Activated CD8-positive, alpha-beta T cell treated with anti-CD3 and anti-CD28 coated beads, Interleukin-2, amount 10 ng/mL, durations not matched to agents 7 days and 5 days (primary cell): ENCODE measurements at regions of chr7 and their contacts with region 1.

Region 1: GRCh38 chr7:5677538-5678294 is 103.7 kb downstream of the RNF216 start:
- DNase-seq: peak; percentile 64
- ATAC-seq: peak; percentile 48
- H3K4me3 Mint-ChIP-seq: no peak overlapping the region
- H3K27ac Mint-ChIP-seq: no peak overlapping the region
- H3K4me1 Mint-ChIP-seq: peaks cover 51% of the 10 kb centered on the region
- H3K27me3 Mint-ChIP-seq: no peaks in the 10 kb centered on the region

Region 2: GRCh38 chr7:5494683-5495561 is 182.8 kb before region 1 on chr7:
- CTCF ChIA-PET with region 1: interaction called, 20 read pairs
- POLR2A ChIA-PET with region 1: no interaction called
- DNase-seq: peak; percentile 85
- ATAC-seq: peak; percentile 91
- H3K4me3 Mint-ChIP-seq: no peak overlapping the region
- H3K27ac Mint-ChIP-seq: peak overlapping the region; percentile 46
- H3K4me1 Mint-ChIP-seq: peaks cover 44% of the 10 kb centered on the region
- H3K27me3 Mint-ChIP-seq: no peaks in the 10 kb centered on the region

Region 3: GRCh38 chr7:5557920-5558401 is 119.8 kb before region 1 on chr7:
- CTCF ChIA-PET with region 1: interaction called, 20 read pairs
- POLR2A ChIA-PET with region 1: no interaction called
- DNase-seq: peak; percentile 39
- ATAC-seq: peak; percentile 21
- H3K4me3 Mint-ChIP-seq: peak overlapping the region; percentile 81
- H3K27ac Mint-ChIP-seq: peak overlapping the region; percentile 90
- H3K4me1 Mint-ChIP-seq: peaks cover 55% of the 10 kb centered on the region
- H3K27me3 Mint-ChIP-seq: peaks cover 7% of the 10 kb centered on the region

Region 4: GRCh38 chr7:5646852-5647251 is 30.9 kb before region 1 on chr7:
- CTCF ChIA-PET with region 1: no interaction called
- POLR2A ChIA-PET with region 1: no interaction called
- DNase-seq: no peak
- ATAC-seq: no peak
- H3K4me3 Mint-ChIP-seq: no peak overlapping the region
- H3K27ac Mint-ChIP-seq: no peak overlapping the region
- H3K4me1 Mint-ChIP-seq: peaks cover 30% of the 10 kb centered on the region
- H3K27me3 Mint-ChIP-seq: no peaks in the 10 kb centered on the region

Region 5: GRCh38 chr7:5689118-5689517 is 11.4 kb after region 1 on chr7:
- CTCF ChIA-PET with region 1: interaction called, 28 read pairs
- POLR2A ChIA-PET with region 1: interaction called, 6 read pairs
- DNase-seq: peak; percentile 71
- ATAC-seq: peak; percentile 58
- H3K4me3 Mint-ChIP-seq: peak overlapping the region; percentile 51
- H3K27ac Mint-ChIP-seq: peak overlapping the region; percentile 90
- H3K4me1 Mint-ChIP-seq: peaks cover 94% of the 10 kb centered on the region
- H3K27me3 Mint-ChIP-seq: no peaks in the 10 kb centered on the region

Region 6: GRCh38 chr7:5694912-5695726 is 17.4 kb after region 1 on chr7:
- CTCF ChIA-PET with region 1: interaction called, 28 read pairs
- POLR2A ChIA-PET with region 1: interaction called, 6 read pairs
- DNase-seq: peak; percentile 89
- ATAC-seq: peak; percentile 81
- H3K4me3 Mint-ChIP-seq: peak overlapping the region; percentile 73
- H3K27ac Mint-ChIP-seq: peak overlapping the region; percentile 89
- H3K4me1 Mint-ChIP-seq: peaks cover 94% of the 10 kb centered on the region
- H3K27me3 Mint-ChIP-seq: no peaks in the 10 kb centered on the region

Region 7: DNA sequence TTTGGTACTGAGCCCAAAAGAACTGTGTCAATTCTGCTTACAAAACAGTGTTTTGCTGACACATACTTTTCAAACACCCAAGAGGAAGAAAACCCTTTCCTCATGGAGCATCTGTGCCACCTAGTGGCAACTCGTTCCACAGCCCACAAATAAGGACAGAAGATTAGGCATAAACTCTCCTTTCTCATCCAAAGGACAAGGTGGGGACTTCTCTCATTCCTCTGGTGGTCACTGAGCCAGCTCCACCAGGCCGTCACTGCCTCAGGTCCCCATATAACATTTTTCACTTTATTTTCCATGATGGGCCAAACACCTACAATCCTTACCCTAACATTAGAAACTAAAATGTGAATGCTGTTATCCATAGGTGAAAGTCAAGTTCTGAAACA is 26.8 kb after region 1 on chr7:
- CTCF ChIA-PET with region 1: interaction called, 45 read pairs
- POLR2A ChIA-PET with region 1: no interaction called
- DNase-seq: peak; percentile 80
- ATAC-seq: no peak
- H3K4me3 Mint-ChIP-seq: no peak overlapping the region
- H3K27ac Mint-ChIP-seq: no peak overlapping the region
- H3K4me1 Mint-ChIP-seq: peaks cover 35% of the 10 kb centered on the region
- H3K27me3 Mint-ChIP-seq: no peaks in the 10 kb centered on the region

Region 8: DNA sequence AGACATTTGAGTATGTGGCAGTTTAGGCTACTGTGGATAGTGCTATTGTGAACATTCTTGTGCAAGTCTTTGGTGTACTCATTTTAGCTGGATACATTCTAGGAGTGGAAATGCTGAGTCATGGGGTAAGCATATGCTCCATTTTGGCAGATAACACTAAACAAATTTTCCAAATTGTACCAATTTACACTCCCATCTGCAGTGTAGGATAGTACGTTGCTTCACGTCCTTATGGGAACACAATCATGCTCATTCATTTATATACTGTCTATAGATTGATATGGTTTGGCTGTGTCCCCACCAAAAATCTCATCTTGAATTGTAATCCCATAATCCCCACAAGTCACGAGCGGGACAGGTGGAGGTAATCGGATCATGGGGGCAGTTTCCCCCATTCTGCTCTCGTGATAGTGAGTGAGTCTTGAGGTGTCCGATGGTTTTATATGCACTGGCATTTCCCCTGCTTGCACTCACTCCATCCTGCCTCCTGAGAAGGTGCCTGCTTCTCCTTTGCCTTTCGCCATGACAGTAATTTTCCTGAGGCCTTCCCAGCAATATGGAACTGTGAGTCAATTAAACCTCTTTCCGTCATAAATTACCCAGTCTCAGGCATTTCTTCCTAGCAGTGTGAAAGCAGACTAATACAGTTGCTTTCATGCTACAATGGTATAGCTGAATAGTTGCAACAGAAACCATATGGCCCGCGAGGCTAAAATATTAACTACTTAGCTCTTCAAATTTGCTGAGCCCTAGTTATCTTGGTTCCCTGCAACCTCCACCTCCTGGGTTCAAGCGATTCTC is 78.2 kb after region 1 on chr7:
- CTCF ChIA-PET with region 1: no interaction called
- POLR2A ChIA-PET with region 1: no interaction called
- DNase-seq: no peak
- ATAC-seq: no peak
- H3K4me3 Mint-ChIP-seq: no peak overlapping the region
- H3K27ac Mint-ChIP-seq: no peak overlapping the region
- H3K4me1 Mint-ChIP-seq: peaks cover 7% of the 10 kb centered on the region
- H3K27me3 Mint-ChIP-seq: no peaks in the 10 kb centered on the region